IMR-90 (cell line): ENCODE measurements at regions of chr12 and their contacts with region 1.

Region 1: GRCh38 chr12:122190842-122191668 is 8.1 kb downstream of the LRRC43 start:
- DNase-seq: peak; percentile 59
- ATAC-seq: peak; percentile 92
- H3K4me3 ChIP-seq: no peak overlapping the region
- H3K27ac ChIP-seq: no peak overlapping the region
- H3K4me1 ChIP-seq: peaks cover 3% of the 10 kb centered on the region; the same call in 1 of the 2 replicates
- H3K27me3 ChIP-seq: no peaks in the 10 kb centered on the region
- CTCF ChIP-seq: peak; percentile 83
- POLR2A ChIP-seq: no peak
- RAD21 ChIP-seq: peak; percentile 88

Region 2: GRCh38 chr12:122130150-122130549 is 60.9 kb before region 1 on chr12:
- CTCF ChIA-PET with region 1: interaction called, 11 read pairs
- POLR2A ChIA-PET with region 1: no interaction called
- dilution Hi-C with region 1: no loop called
- in situ Hi-C with region 1: loop called (anchors 5 kb)
- intact Hi-C with region 1: loop called (anchors 1 kb)
- DNase-seq: peak; percentile 48
- ATAC-seq: peak; percentile 5; the same call in 1 of the 2 replicates
- H3K4me3 ChIP-seq: no peak overlapping the region
- H3K27ac ChIP-seq: no peak overlapping the region
- H3K4me1 ChIP-seq: no peaks in the 10 kb centered on the region
- H3K27me3 ChIP-seq: no peaks in the 10 kb centered on the region
- CTCF ChIP-seq: no peak
- POLR2A ChIP-seq: no peak
- RAD21 ChIP-seq: no peak